Activated B cell treated with CpG ODN at 0.5 μM for 24 hours (primary cell): ENCODE measurements at regions of chr16 and their contacts with region 1.

Region 1: GRCh38 chr16:31073968-31074813 is at the starts of genes ZNF646 and ZNF668:
- DNase-seq: peak; percentile 86
- ATAC-seq: peak; percentile 83
- H3K4me3 Mint-ChIP-seq: peak within 1 kb of the TSS; percentile 96
- H3K27ac Mint-ChIP-seq: peak within 1 kb of the TSS; percentile 91
- H3K4me1 Mint-ChIP-seq: peaks cover 34% of the 10 kb centered on the region
- H3K27me3 Mint-ChIP-seq: no peaks in the 10 kb centered on the region
- CTCF ChIP-seq: no peak
- total RNA-seq, gene ZNF646: 32.4 and 32.5 TPM in 2 replicates
- total RNA-seq, gene ZNF668: 8.3 and 10.1 TPM in 2 replicates

Region 2: GRCh38 chr16:30893744-30894539 is 180.2 kb before region 1 on chr16 and contains the start of gene BCL7C:
- CTCF ChIA-PET with region 1: no interaction called
- POLR2A ChIA-PET with region 1: no interaction called
- intact Hi-C with region 1: loop called (anchors 2 kb)
- DNase-seq: peak; percentile 86
- ATAC-seq: peak; percentile 76
- H3K4me3 Mint-ChIP-seq: peak within 1 kb of the TSS; percentile 84
- H3K27ac Mint-ChIP-seq: peak within 1 kb of the TSS; percentile 88
- H3K4me1 Mint-ChIP-seq: peaks cover 48% of the 10 kb centered on the region
- H3K27me3 Mint-ChIP-seq: no peaks in the 10 kb centered on the region
- CTCF ChIP-seq: no peak
- total RNA-seq, gene BCL7C: 32.2 and 35.7 TPM in 2 replicates

Region 3: DNA sequence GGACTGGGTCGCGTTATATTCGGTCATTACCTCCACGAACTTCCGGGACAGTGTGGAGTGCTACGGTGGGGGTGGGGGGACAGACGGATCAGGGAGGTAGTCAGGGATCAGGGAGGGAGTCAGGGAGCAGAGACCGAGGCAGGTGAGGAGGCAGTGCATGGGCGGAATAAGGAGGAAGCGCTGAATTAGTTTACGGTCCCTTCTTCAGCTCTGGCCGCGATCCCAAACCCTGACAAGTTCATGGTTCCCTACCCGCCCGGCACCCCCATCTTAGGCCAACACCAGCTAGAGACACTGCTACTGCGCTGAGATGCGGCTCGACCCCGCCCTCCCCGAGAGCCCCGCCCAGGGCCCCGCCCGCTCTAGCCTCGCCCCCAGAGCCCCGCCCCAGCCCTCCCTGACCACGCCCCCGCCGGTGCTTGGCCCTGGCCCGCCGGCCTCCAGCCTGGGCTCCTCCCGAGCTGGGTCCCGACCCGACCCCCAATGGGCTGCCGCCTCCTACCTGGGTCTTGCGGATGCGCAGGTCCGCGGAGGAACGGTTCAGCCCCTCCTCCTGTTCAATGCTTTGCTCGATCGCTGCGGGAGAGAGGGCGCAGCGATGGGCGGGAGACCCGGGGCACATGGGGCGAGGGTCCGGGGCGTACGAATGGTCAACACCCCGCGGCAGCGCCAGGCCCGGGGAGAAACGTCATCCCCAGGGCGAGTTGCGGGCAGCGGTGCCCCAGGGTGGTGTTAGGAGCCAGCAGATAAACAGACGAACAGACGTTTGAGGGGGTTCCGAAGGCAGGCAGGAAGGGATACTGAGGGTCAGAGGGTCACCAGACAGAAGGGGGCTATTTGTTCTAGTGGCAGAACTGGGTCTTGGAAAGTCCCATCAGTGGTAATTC is 76.9 kb before region 1 on chr16:
- CTCF ChIA-PET with region 1: no interaction called
- POLR2A ChIA-PET with region 1: interaction called, 13 read pairs
- intact Hi-C with region 1: loop called (anchors 1 kb)
- DNase-seq: peak; percentile 68
- ATAC-seq: peak; percentile 99
- H3K4me3 Mint-ChIP-seq: peak overlapping the region; percentile 87
- H3K27ac Mint-ChIP-seq: peak overlapping the region; percentile 76
- H3K4me1 Mint-ChIP-seq: peaks cover 12% of the 10 kb centered on the region
- H3K27me3 Mint-ChIP-seq: no peaks in the 10 kb centered on the region
- CTCF ChIP-seq: no peak

Region 4: GRCh38 chr16:31055613-31056012 is 18.6 kb before region 1 on chr16:
- CTCF ChIA-PET with region 1: no interaction called
- POLR2A ChIA-PET with region 1: no interaction called
- intact Hi-C with region 1: no loop called
- DNase-seq: no peak
- ATAC-seq: no peak
- H3K4me3 Mint-ChIP-seq: no peak overlapping the region
- H3K27ac Mint-ChIP-seq: no peak overlapping the region
- H3K4me1 Mint-ChIP-seq: no peaks in the 10 kb centered on the region
- H3K27me3 Mint-ChIP-seq: no peaks in the 10 kb centered on the region
- CTCF ChIP-seq: no peak

Region 5: DNA sequence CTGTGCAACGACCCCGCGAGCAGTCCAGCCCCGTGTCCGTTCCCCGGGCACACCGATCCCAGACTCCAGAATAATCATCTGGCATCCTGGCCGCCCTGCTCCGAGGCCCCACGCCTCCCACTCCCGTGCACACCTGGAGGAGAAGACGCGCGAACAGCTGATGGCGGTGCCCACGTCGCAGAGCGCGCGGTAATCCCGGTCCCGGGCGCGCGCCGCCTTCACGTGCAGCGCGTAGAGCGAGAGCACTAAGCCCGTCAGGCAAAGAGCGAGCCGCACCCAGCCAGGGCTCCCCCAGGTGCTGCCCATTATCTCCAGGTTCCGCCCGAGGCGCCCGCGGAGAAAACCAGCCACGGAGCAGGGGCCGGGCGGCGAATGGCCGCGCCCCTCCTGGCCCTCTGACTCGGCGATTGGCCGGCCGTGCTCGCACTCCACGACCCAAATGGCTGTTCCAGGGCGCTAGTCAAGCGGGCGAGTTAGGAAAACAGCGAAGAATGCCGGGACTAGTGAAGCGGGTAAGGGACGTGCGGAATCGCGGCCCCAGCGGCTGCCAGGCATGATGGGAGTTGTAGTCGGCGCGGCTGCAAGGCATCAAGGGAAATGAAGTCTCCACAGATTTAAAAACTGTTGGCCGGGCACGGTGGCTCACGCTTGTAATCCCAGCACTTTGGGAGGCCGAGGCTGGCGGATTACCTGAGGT is 20.4 kb after region 1 on chr16 and contains the start of gene VKORC1:
- CTCF ChIA-PET with region 1: no interaction called
- POLR2A ChIA-PET with region 1: interaction called, 39 read pairs
- intact Hi-C with region 1: loop called (anchors 1 kb)
- DNase-seq: peak; percentile 77
- ATAC-seq: peak; percentile 88
- H3K4me3 Mint-ChIP-seq: peak within 1 kb of the TSS; percentile 95
- H3K27ac Mint-ChIP-seq: peak within 1 kb of the TSS; percentile 93
- H3K4me1 Mint-ChIP-seq: peaks cover 25% of the 10 kb centered on the region
- H3K27me3 Mint-ChIP-seq: no peaks in the 10 kb centered on the region
- CTCF ChIP-seq: no peak
- total RNA-seq, gene VKORC1: 38.7 and 41.9 TPM in 2 replicates

Region 6: GRCh38 chr16:31440516-31441184 is 366.5 kb after region 1 on chr16:
- CTCF ChIA-PET with region 1: interaction called, 3 read pairs
- POLR2A ChIA-PET with region 1: no interaction called
- intact Hi-C with region 1: loop called (anchors 5 kb)
- DNase-seq: no peak
- ATAC-seq: no peak
- H3K4me3 Mint-ChIP-seq: peak overlapping the region; percentile 24
- H3K27ac Mint-ChIP-seq: no peak overlapping the region
- H3K4me1 Mint-ChIP-seq: peaks cover 19% of the 10 kb centered on the region
- H3K27me3 Mint-ChIP-seq: peaks cover 2% of the 10 kb centered on the region
- CTCF ChIP-seq: no peak